Ovary (tissue), 10 donors: ENCODE measurements at regions of chr13 and their contacts with region 1.

Region 1: DNA sequence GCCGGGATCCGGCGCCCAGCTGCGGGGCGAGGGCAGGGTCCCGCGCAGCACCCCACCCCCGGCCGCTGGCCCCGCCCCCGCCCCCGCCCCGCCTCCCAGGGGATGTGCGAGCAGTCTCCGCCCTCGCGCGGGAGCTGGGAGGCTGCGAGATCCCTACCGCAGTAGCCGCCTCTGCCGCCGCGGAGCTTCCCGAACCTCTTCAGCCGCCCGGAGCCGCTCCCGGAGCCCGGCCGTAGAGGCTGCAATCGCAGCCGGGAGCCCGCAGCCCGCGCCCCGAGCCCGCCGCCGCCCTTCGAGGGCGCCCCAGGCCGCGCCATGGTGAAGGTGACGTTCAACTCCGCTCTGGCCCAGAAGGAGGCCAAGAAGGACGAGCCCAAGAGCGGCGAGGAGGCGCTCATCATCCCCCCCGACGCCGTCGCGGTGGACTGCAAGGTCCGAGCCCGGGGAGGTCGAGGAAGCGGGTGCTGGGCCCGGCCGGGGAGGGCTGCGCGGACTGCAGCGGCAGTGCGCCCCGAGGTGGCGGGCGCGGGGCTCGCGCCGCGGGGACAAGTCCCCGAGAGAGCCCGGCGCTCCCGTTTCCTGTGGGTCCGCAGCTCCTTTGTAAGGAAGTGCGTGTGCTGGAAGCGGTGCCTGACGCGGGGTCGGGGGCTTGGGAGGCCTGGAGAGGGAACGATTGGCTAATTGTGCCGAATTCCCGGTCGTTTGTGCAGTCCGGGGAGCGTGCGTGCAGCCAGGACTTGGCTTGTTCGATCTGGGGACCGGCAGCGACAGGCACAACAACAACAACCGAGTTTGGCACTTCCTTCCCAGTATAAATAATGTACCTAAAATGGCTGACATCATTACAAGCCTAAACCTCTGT is at the start of gene ITM2B:
- DNase-seq: peak; percentile 80 to 90 (median 86)
- H3K4me3 ChIP-seq: peak within 1 kb of the TSS; percentile 97
- H3K27ac ChIP-seq: peak within 1 kb of the TSS; percentile 99
- H3K4me1 ChIP-seq: peaks cover 7% of the 10 kb centered on the region
- H3K27me3 ChIP-seq: no peaks in the 10 kb centered on the region
- CTCF ChIP-seq: peak in 1 of 3 donors; percentile 48
- EP300 ChIP-seq: no peak
- POLR2A ChIP-seq: peak; percentile 76
- total RNA-seq, gene ITM2B: 635 to 1,026 (median 824) TPM

Region 2: GRCh38 chr13:47826471-47826870 is 406.8 kb before region 1 on chr13:
- intact Hi-C with region 1: no loop called
- DNase-seq: no peak
- H3K4me3 ChIP-seq: no peak overlapping the region
- H3K27ac ChIP-seq: no peak overlapping the region
- H3K4me1 ChIP-seq: no peaks in the 10 kb centered on the region
- H3K27me3 ChIP-seq: no peaks in the 10 kb centered on the region
- CTCF ChIP-seq: no peak
- EP300 ChIP-seq: no peak
- POLR2A ChIP-seq: no peak

Region 3: GRCh38 chr13:48037346-48038173 is 195.7 kb before region 1 on chr13 and contains the start of gene NUDT15:
- intact Hi-C with region 1: loop called in 1 of 4 experiments (anchors 5 kb)
- DNase-seq: peak; percentile 88 to 96 (median 92)
- H3K4me3 ChIP-seq: peak within 1 kb of the TSS; percentile 60
- H3K27ac ChIP-seq: peak within 1 kb of the TSS; percentile 94 to 97
- H3K4me1 ChIP-seq: no peaks in the 10 kb centered on the region
- H3K27me3 ChIP-seq: no peaks in the 10 kb centered on the region
- CTCF ChIP-seq: peak; percentile 94 to 98 (median 96)
- EP300 ChIP-seq: no peak
- POLR2A ChIP-seq: peak; percentile 76
- total RNA-seq, gene NUDT15: 6.1 to 11.2 (median 9.7) TPM

Region 4: DNA sequence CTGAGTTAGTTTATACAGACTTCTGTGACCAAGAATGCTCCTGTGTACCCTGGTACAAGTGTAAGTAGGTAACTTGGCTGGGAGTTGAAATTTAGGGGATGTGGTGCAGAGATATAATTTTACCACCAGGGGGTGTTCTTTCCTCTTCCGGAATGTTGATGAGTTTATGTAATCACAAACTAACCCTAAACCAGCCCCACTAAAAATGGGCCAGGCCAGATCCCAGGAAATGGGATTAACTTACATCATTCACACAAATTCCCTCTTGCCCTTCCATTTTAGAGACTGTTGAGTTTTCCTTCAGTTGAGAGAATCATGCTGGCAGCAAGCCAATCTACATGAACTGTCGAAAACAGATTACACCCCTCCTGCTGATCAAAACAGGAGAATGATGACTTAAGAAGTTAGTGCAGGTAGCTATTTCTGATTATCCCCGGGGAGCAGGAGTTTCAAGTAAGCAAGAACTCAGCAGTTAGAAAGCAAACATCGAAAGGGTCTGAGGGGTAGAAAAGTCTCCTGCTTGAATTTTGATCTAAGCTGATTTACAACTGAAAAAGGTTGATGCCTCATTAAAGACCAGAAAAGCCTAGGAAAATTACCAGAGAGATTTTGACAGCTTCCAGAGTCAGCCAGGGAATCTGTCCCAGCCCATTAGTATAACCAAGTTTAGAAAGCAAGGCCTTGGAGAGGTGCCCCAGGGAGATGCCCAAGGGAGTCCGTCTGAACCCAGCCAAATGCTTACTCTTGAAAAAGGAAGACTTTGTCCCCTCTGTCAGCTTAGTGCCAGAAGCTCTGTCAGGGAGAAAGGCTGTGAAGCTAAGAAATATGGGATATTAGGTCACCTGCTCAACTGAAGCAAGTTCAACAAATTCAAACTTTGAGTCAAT is 106.1 kb before region 1 on chr13:
- intact Hi-C with region 1: loop called in 2 of 4 experiments (anchors 10 kb)
- DNase-seq: peak; percentile 27 to 66 (median 48)
- H3K4me3 ChIP-seq: no peak overlapping the region
- H3K27ac ChIP-seq: peak overlapping the region in 1 of 2 donors; percentile 39
- H3K4me1 ChIP-seq: peaks cover 12% of the 10 kb centered on the region
- H3K27me3 ChIP-seq: no peaks in the 10 kb centered on the region
- CTCF ChIP-seq: peak; percentile 42 to 76 (median 71)
- EP300 ChIP-seq: no peak
- POLR2A ChIP-seq: no peak

Region 5: DNA sequence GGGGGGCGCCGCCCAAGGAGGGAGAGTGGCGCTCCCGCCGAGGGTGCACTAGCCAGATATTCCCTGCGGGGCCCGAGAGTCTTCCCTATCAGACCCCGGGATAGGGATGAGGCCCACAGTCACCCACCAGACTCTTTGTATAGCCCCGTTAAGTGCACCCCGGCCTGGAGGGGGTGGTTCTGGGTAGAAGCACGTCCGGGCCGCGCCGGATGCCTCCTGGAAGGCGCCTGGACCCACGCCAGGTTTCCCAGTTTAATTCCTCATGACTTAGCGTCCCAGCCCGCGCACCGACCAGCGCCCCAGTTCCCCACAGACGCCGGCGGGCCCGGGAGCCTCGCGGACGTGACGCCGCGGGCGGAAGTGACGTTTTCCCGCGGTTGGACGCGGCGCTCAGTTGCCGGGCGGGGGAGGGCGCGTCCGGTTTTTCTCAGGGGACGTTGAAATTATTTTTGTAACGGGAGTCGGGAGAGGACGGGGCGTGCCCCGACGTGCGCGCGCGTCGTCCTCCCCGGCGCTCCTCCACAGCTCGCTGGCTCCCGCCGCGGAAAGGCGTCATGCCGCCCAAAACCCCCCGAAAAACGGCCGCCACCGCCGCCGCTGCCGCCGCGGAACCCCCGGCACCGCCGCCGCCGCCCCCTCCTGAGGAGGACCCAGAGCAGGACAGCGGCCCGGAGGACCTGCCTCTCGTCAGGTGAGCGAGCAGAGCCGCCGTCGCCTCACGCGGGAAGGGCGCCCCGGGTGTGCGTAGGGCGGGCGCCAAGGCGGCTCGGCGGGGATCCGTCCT is 70.3 kb after region 1 on chr13 and contains the start of gene RB1:
- intact Hi-C with region 1: loop called in 2 of 4 experiments (anchors 5 to 10 kb)
- DNase-seq: peak; percentile 93 to 96 (median 95)
- H3K4me3 ChIP-seq: peak within 1 kb of the TSS; percentile 92
- H3K27ac ChIP-seq: peak within 1 kb of the TSS; percentile 95 to 98
- H3K4me1 ChIP-seq: peaks cover 8% of the 10 kb centered on the region
- H3K27me3 ChIP-seq: no peaks in the 10 kb centered on the region
- CTCF ChIP-seq: peak in 2 of 3 donors; percentile 11 to 39
- EP300 ChIP-seq: peak; percentile 20
- POLR2A ChIP-seq: peak; percentile 97
- total RNA-seq, gene RB1: 23.7 to 36.6 (median 27.3) TPM

Region 6: DNA sequence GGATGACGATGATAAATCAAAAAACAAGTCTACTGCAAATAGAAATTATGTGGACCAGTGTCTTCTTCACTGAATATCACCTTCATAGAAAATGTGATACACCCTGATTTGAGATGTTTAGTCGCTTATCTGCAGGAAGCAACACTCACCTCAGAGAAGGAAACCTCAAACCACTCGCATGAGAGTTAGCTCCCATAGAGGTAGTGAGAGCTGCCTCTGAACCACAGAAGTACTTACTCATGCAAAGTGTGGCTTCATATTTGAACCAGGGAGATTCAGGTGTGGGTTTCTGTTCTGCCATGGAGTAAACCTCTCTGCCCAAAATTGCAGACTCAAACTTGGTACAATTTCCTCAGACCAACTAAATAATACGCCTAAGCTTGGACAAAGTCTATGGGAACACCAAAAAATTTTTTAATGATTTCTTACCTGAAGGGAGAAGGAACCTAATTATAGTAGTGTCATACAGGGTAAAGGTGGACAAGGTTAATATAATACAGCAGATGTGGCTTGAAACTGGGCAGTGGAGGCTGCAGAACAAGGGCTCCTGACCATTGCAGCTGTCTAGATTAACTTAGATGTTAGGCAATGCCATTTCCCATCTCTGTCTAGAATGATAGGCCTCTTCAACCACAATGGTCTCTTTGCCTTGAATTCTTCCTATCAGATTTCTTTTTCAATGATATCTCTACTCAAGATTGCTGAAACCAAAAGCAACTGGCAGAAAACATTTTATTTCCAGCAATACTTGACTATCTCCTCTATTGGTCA is 329.2 kb after region 1 on chr13:
- intact Hi-C with region 1: loop called in 1 of 4 experiments (anchors 10 kb)
- DNase-seq: no peak
- H3K4me3 ChIP-seq: no peak overlapping the region
- H3K27ac ChIP-seq: no peak overlapping the region
- H3K4me1 ChIP-seq: peaks cover under 1% of the 10 kb centered on the region
- H3K27me3 ChIP-seq: no peaks in the 10 kb centered on the region
- CTCF ChIP-seq: no peak
- EP300 ChIP-seq: no peak
- POLR2A ChIP-seq: no peak